ENCODE measurements at regions of chr21 and their contacts with region 1.

Region 1: DNA sequence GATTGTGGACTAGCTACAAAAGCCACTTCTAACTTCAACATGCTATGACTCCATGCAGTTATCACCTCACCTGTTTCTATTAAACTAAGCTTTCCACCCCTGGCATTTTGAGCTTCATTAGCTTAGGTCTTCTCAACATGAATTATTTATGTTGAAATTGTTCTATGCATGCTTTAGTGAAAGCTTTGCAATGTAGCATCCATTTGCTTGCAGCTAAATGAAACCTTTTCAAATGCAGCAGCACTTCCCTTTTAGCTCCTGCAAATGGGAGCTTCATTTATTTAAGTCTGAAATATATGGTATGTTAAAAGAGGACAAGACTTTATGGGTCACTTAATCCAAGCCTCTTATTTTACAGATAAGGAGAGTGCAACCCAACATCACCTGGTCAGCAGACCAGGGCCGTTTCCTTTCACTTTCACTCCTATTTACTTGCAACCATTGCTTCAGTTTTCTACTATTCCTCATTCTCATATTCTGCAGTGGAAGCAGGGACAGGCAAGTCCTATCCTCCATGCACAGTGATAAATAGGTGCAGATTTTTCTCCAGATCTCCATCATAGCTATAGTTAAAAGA is 56.4 kb upstream of the SAMSN1 start:
- DNase-seq: peak; percentile 14
- H3K4me3 Mint-ChIP-seq: no peak overlapping the region
- H3K27ac Mint-ChIP-seq: peak overlapping the region; percentile 83
- H3K4me1 Mint-ChIP-seq: peaks cover 24% of the 10 kb centered on the region
- H3K27me3 Mint-ChIP-seq: no peaks in the 10 kb centered on the region
- CTCF ChIP-seq: no peak

Region 2: GRCh38 chr21:14591882-14592281 is 10.6 kb before region 1 on chr21:
- CTCF ChIA-PET with region 1: no interaction called
- POLR2A ChIA-PET with region 1: interaction called, 31 read pairs
- intact Hi-C with region 1: no loop called
- DNase-seq: peak; percentile 88
- H3K4me3 Mint-ChIP-seq: no peak overlapping the region
- H3K27ac Mint-ChIP-seq: peak overlapping the region; percentile 63
- H3K4me1 Mint-ChIP-seq: peaks cover 15% of the 10 kb centered on the region
- H3K27me3 Mint-ChIP-seq: no peaks in the 10 kb centered on the region
- CTCF ChIP-seq: no peak

Region 3: DNA sequence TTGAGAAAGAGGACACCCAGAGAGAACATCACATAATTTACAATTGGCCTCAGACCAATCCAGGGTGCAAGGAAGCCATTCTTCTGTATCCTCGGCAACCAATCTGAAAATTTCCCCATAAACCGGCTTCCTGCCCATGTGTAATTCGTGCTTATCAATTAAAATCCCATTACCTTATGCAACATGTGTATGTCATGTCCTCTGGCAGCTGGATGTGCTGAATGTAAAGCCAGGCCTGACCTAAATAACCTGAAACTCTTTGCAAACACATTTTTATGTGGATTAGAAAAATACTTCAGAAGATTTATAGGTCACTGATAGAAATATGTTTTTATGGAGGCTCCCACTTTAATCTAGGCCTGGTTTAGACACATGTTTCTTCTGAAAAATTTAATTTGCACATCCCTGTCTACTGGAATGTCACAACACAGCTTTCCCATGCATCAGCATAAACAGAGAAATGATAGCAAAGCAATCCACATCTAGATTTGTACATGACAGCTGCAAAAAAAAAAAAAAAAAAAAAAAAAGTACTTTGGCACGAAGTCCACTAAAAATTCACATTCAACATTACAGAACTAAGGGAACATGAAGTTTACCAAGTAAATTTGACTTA is 13.0 kb after region 1 on chr21:
- CTCF ChIA-PET with region 1: interaction called, 9 read pairs
- POLR2A ChIA-PET with region 1: interaction called, 18 read pairs
- intact Hi-C with region 1: no loop called
- DNase-seq: no peak
- H3K4me3 Mint-ChIP-seq: peak overlapping the region; percentile 63
- H3K27ac Mint-ChIP-seq: peak overlapping the region; percentile 10
- H3K4me1 Mint-ChIP-seq: peaks cover 10% of the 10 kb centered on the region
- H3K27me3 Mint-ChIP-seq: no peaks in the 10 kb centered on the region
- CTCF ChIP-seq: no peak

Measured in MCF 10A (cell line).